Naive thymus-derived CD4-positive, alpha-beta T cell (primary cell): ENCODE measurements at regions of chr5 and their contacts with region 1.

Region 1: DNA sequence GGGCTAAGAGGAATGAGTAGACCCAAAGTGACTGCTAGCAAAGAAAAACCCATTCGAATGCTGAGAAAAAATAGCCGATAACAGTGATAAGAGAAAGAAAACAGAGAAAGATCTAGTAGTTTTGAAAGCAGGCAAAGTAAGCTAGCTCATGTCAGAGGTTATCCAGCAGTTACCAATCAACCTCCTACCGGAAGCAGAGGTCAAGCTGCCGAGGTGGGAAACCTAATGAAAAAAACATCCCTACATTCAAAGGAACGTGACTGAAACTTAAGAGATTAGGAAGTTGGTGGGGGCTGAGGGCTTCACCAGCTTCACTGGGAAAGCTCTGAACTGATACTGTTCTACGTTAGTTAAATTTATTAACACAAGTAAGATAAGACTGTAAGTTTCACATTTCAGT is 32.6 kb downstream of the SSBP2 start:
- DNase-seq: peak in 1 of 9 donors; percentile 8
- ATAC-seq: peak; percentile 39
- H3K4me3 ChIP-seq: no peak overlapping the region
- H3K4me3 Mint-ChIP-seq: peak overlapping the region in 9 of 10 donors; percentile 1 to 72 (median 57)
- H3K27ac ChIP-seq: no peak overlapping the region
- H3K27ac Mint-ChIP-seq: peak overlapping the region in 5 of 9 donors; percentile 9 to 83 (median 60)
- H3K4me1 ChIP-seq: peaks cover 0 to 39% of the 10 kb centered on the region in 2 donors
- H3K4me1 Mint-ChIP-seq: peaks cover 27 to 96% (median 84%) of the 10 kb centered on the region in 7 donors
- H3K27me3 ChIP-seq: no peaks in the 10 kb centered on the region
- H3K27me3 Mint-ChIP-seq: no peaks in the 10 kb centered on the region

Region 2: GRCh38 chr5:81728301-81728700 is 10.0 kb after region 1 on chr5:
- CTCF ChIA-PET with region 1: no interaction called
- POLR2A ChIA-PET with region 1: no interaction called
- intact Hi-C with region 1: loop called in 1 of 2 experiments (anchors 1 kb)
- DNase-seq: no peak
- ATAC-seq: no peak
- H3K4me3 ChIP-seq: no peak overlapping the region
- H3K4me3 Mint-ChIP-seq: peak overlapping the region in 1 of 10 donors; percentile 15
- H3K27ac ChIP-seq: no peak overlapping the region
- H3K27ac Mint-ChIP-seq: no peak overlapping the region
- H3K4me1 ChIP-seq: peaks cover 0 to 4% of the 10 kb centered on the region in 2 donors
- H3K4me1 Mint-ChIP-seq: peaks cover 2 to 84% (median 55%) of the 10 kb centered on the region in 7 donors
- H3K27me3 ChIP-seq: no peaks in the 10 kb centered on the region
- H3K27me3 Mint-ChIP-seq: no peaks in the 10 kb centered on the region

Region 3: GRCh38 chr5:81948349-81948748 is 230.0 kb after region 1 on chr5:
- CTCF ChIA-PET with region 1: no interaction called
- POLR2A ChIA-PET with region 1: no interaction called
- intact Hi-C with region 1: no loop called
- DNase-seq: no peak
- ATAC-seq: no peak
- H3K4me3 ChIP-seq: no peak overlapping the region
- H3K4me3 Mint-ChIP-seq: no peak overlapping the region
- H3K27ac ChIP-seq: no peak overlapping the region
- H3K27ac Mint-ChIP-seq: no peak overlapping the region
- H3K4me1 ChIP-seq: no peaks in the 10 kb centered on the region
- H3K4me1 Mint-ChIP-seq: no peaks in the 10 kb centered on the region
- H3K27me3 ChIP-seq: no peaks in the 10 kb centered on the region
- H3K27me3 Mint-ChIP-seq: no peaks in the 10 kb centered on the region